ENCODE measurements at regions of chr17 and their contacts with region 1.

Region 1: DNA sequence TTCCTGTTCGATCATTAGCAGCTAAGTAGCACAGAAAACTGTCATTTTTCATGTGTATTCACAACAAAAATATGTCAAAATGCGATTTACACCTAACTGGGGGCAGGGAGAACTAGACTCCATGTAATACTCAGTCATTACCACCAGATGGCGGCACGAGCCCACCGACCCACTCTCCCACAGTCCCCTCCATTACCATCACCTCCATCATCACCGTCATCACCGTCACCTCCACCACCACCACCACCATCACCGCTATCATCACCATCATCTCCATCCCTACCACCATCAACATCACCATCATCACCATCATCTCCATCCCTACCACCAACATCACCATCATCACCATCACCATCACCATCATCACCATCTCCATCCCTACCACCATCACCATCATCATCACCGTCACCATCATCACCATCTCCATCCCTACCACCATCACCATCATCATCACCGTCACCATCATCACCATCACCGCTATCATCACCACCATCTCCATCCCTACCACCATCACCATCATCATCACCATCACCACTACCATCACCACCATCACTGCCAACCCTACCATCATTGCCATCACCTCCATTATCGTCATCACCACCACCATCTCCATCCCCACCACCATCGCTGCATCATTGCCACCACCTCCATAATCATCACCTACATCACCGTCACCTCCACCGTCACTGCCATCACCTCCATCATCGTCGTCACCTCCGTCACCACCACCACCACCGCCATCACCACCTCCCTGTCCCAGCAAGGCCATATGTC is 14.4 kb downstream of the NDUFAF8 start:
- DNase-seq: no peak
- H3K4me3 ChIP-seq: no peak overlapping the region
- H3K27ac ChIP-seq: no peak overlapping the region
- H3K4me1 ChIP-seq: peaks cover 0 to 16% (median 13%) of the 10 kb centered on the region in 4 donors
- H3K27me3 ChIP-seq: no peaks in the 10 kb centered on the region
- CTCF ChIP-seq: peak; percentile 82 to 92

Region 2: DNA sequence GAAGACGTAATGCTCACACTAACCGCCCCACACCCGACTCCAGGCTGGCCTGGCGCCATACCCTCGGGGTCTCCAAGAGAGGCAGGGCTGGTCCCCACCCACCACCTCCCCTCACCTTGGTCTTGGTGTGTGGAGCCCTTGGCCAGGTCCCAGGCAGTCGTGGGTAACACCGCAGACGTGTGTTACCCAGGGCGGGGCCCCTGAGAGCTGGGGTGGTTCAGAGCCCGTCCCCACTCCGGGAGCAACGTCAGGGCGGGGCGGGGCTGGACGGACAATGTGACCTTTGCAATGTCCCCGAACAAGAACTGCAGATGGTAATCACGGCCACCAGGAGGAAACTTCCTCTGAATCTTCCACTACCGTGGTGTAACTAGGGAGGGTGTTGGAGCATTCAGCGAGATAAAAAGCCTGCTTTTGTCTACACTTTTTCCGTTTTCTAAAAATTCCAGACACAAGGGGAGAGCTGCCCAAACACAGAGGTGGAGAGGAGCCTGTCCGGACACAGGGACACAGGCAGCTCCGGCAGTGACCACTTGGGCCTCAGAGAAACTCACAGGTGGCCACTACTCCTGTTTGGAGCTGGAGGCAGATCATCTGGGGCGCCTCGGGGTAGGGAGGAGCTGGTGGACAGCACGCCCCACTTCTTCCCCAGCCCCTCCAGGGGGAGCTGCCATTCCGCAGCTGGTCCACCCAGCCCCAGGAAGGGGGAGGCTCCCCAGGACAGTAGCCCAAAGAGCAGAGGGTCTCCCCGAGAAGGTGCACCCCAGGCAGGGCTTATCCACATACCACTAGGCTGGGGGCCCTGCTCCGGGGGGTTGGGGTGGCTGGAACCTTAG is 55.7 kb after region 1 on chr17:
- intact Hi-C with region 1: no loop called
- DNase-seq: peak; percentile 93
- H3K4me3 ChIP-seq: peak overlapping the region; percentile 27 to 31
- H3K27ac ChIP-seq: no peak overlapping the region
- H3K4me1 ChIP-seq: peaks cover 0 to 17% (median 13%) of the 10 kb centered on the region in 4 donors
- H3K27me3 ChIP-seq: peaks cover 0 to 54% of the 10 kb centered on the region in 2 donors
- CTCF ChIP-seq: peak; percentile 35 to 52

Region 3: DNA sequence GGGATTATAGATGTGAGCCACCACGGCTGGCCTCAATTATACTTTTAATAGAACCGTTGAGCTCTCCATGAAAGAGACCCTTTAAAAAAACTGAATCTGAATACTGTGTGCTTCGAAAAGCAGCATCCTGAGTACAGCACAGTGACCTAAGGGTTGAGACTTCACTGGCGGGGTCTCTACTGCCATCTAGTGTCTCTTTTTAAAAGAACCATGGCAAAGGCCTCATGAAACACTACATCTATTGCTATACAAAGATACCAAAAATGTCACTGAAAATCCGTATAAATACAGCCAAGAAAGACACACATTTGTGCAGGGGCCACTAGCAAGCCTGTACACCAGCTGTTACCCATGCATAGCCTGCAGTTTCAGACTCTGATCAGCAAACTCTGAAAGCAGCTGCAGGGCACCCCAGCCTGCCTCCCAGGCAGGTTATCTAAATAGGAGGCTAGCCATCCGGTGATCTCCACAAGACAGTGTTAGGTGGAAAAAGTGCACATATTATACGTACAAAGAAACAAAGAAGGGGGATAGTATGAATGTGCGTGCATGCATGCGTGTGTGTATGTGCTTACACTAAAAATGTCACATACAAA is 348.1 kb after region 1 on chr17:
- intact Hi-C with region 1: loop called (anchors 5 kb)
- DNase-seq: peak in 1 of 2 donors; percentile 30
- H3K4me3 ChIP-seq: no peak overlapping the region
- H3K27ac ChIP-seq: no peak overlapping the region
- H3K4me1 ChIP-seq: peaks cover 0 to 17% (median 9%) of the 10 kb centered on the region in 4 donors
- H3K27me3 ChIP-seq: no peaks in the 10 kb centered on the region
- CTCF ChIP-seq: peak; percentile 77 to 86

Measured in tibial artery (tissue), 4 donors.